ENCODE measurements at regions of chr4 and their contacts with region 1.

Region 1: GRCh38 chr4:38759113-38759789 is 23.5 kb downstream of the TLR10 start:
- DNase-seq: peak; percentile 59
- H3K4me3 Mint-ChIP-seq: no peak overlapping the region
- H3K27ac Mint-ChIP-seq: no peak overlapping the region
- H3K4me1 Mint-ChIP-seq: no peaks in the 10 kb centered on the region
- H3K27me3 Mint-ChIP-seq: no peaks in the 10 kb centered on the region
- CTCF ChIP-seq: peak; percentile 78

Region 2: DNA sequence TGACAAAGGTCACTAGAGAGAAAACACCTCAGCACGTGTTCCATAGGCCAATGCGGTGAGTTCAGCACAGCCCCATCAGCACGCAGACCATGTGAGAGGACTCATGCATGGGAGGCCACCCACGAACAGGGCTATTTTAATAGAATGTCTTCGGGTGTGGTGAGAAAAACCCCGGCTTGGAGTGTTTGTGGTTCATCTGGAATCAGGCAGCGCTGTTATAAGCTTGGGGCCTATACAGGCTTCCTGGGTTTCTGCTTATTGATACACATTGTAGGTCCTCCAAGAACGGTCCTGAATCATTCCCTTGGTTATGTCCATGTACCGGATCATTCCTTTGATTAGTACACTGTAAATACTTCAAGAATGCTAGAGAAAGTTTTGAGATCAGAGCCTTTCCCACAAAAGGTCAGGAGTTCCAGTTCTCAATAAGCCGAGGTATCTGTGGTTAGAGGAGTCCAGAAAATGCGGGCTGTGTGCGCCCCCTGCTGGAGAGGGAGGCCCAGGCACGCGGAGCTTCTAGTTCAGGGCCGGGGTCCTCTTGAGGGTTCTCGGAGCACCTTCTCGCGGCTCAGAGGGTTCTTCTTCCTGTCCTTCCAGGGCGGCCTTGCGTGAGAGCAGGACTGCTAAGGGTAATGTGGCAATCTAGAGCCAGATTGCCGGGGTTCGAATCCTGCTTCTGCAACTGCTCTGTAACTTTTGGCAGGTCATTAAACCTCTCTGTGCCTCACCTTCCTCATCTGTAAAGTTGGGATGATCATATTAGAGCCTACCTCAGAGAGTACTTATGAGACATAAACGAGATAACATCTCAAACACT is 28.2 kb before region 1 on chr4:
- CTCF ChIA-PET with region 1: interaction called, 11 read pairs
- POLR2A ChIA-PET with region 1: interaction called, 4 read pairs
- intact Hi-C with region 1: no loop called
- DNase-seq: peak; percentile 81
- H3K4me3 Mint-ChIP-seq: no peak overlapping the region
- H3K27ac Mint-ChIP-seq: no peak overlapping the region
- H3K4me1 Mint-ChIP-seq: peaks cover 16% of the 10 kb centered on the region
- H3K27me3 Mint-ChIP-seq: no peaks in the 10 kb centered on the region
- CTCF ChIP-seq: peak; percentile 97

Region 3: DNA sequence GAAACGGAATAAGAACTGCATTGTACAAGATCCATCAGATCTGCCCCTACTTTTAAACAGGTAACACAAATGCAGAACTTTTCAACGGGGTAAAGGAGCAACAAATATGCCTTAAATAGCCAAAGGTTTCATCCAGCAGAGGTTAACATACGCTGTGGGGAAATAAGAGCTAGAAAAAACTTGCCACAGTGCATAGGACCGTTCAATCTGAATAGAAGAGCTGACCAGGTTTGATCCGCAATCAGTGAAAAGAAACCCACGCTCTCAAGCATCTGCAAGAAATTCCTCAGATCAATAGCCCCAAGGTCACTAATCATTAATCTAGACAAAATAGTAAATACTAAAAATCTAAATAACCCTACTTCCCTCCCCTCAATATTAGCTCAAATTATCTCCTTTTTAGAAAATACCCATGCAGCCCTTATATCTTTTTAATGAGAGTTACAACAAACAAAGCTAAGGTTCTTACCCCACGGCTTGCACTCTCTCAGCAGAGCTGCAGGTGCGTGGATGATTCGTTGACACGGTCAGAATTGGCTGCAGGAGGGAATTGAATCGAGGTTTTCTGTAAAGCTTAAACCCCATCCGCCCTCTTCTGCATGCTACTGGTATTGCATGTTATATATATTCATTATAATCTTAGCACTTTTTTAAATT is 23.3 kb after region 1 on chr4 and contains the start of gene TLR10:
- CTCF ChIA-PET with region 1: interaction called, 268 read pairs
- POLR2A ChIA-PET with region 1: interaction called, 11 read pairs
- intact Hi-C with region 1: loop called (anchors 1 kb)
- DNase-seq: peak; percentile 56
- H3K4me3 Mint-ChIP-seq: no peak within 1 kb of the TSS
- H3K27ac Mint-ChIP-seq: no peak within 1 kb of the TSS
- H3K4me1 Mint-ChIP-seq: no peaks in the 10 kb centered on the region
- H3K27me3 Mint-ChIP-seq: no peaks in the 10 kb centered on the region
- CTCF ChIP-seq: peak; percentile 54
- total RNA-seq, gene TLR10: not detected in 2 replicates

Region 4: DNA sequence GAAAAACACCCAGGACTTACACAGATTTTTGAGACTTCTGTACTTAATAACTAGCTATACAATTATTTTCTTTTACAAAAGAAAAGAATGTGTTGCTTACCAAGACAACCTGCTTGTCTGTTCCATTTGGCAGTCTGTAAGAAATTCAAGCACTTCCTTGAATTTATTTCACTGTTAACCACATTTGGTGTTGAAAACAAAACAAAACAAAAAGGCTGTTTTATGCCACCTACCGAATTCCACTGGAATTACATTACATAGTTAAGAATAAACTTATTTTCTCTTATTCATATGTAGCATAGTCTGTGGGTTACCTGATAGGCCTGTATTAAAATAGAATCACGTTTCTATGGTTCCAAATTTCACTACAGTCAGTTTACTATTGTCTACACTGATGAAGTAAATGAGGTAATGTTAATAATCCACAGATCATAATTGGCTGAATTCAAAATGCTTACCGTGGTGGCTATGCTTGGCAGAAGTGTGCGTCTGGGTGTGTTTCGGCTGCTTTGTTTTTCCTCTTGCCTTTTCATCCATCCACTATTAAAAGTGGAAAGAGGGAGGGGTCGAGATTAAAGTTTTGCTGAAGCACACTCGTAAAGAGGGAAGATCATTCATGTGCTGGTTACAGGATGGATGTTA is 45.5 kb after region 1 on chr4 and contains the start of gene TLR1:
- CTCF ChIA-PET with region 1: interaction called, 91 read pairs
- POLR2A ChIA-PET with region 1: interaction called, 12 read pairs
- intact Hi-C with region 1: loop called (anchors 2 kb)
- DNase-seq: peak; percentile 70
- H3K4me3 Mint-ChIP-seq: peak within 1 kb of the TSS; percentile 70
- H3K27ac Mint-ChIP-seq: peak within 1 kb of the TSS; percentile 97
- H3K4me1 Mint-ChIP-seq: peaks cover 25% of the 10 kb centered on the region
- H3K27me3 Mint-ChIP-seq: no peaks in the 10 kb centered on the region
- CTCF ChIP-seq: peak; percentile 40
- total RNA-seq, gene TLR1: 1.9 and 2.2 TPM in 2 replicates

Region 5: DNA sequence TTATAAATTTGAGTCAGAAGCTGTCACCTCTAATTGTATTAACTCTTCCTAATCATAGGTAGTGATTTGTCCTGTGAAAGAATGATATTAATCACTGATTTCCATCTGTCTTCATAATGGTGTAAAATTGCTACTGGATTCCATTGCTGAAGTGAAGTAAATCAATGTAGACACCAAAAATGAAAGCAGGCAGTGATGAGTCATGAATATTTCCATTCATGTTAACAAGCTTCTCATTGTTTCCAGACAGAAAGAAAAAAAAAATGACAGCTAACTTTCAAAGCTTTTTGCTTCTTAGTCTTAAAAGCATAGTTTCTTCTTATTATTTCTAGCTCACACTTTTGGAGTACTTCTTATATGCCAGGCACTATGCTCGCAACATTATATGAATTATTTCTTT is 129.9 kb after region 1 on chr4:
- CTCF ChIA-PET with region 1: interaction called, 22 read pairs
- POLR2A ChIA-PET with region 1: no interaction called
- intact Hi-C with region 1: no loop called
- DNase-seq: peak; percentile 64
- H3K4me3 Mint-ChIP-seq: peak overlapping the region; percentile 21
- H3K27ac Mint-ChIP-seq: peak overlapping the region; percentile 49
- H3K4me1 Mint-ChIP-seq: peaks cover 6% of the 10 kb centered on the region
- H3K27me3 Mint-ChIP-seq: no peaks in the 10 kb centered on the region
- CTCF ChIP-seq: no peak

Region 6: DNA sequence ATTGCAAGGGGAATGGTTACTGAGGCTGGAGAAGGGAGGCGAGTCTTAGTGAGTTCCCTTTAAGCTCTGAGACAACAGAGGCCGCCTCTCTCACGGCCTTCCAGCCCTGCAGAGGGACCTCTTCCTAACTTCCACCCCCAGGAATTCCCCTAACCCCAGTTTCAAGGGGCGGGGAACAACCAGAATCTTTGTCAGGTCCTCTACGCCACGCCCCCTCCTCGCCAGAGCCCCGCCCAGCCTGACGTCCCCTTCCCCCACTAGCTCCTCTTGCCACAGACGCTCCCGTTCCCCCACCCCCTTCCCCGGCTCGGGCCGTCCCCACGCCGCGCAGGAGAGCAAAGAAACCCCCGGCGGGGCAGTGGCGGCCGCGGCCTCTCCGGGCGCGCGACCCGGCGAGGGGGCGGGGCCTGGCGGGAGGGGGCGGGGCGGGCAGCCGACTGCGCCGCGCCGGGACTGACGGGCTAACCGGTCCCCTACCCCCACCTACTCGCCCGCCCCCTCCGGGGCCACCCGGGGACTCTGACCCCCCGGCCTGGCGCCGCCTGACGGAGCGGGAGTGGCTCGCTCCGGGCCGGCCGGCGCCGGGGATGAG is 285.2 kb after region 1 on chr4:
- CTCF ChIA-PET with region 1: no interaction called
- POLR2A ChIA-PET with region 1: no interaction called
- intact Hi-C with region 1: loop called (anchors 10 kb)
- DNase-seq: peak; percentile 95
- H3K4me3 Mint-ChIP-seq: peak overlapping the region; percentile 72
- H3K27ac Mint-ChIP-seq: peak overlapping the region; percentile 73
- H3K4me1 Mint-ChIP-seq: peaks cover 33% of the 10 kb centered on the region
- H3K27me3 Mint-ChIP-seq: no peaks in the 10 kb centered on the region
- CTCF ChIP-seq: no peak

Region 7: DNA sequence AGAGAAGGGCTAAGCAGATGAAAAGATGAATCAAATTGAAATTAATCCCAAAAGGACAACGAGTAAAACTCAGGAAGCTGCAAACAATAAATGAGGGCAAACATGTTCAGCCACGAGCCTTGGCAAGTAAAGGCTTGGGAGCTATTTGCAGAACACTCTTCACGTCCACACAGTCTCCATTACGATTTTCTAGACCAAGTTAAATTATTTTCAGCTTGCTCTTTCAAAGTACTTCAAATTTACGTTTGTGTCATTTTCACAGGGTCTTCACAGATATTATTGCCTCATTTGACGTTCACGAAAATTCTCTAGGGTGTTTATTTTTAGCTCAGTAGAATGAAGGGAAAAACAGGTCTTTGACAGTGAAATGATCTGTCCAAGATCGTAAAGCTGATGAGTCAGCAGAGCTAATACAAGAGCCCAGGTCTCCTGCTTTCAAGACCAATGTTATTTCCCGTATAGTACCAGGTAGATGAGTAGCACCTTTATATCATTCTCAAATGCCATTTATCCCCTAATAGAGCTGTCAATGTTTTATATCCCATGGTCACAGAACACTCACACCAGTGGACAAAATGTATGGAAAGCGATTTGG is 668.4 kb after region 1 on chr4:
- CTCF ChIA-PET with region 1: no interaction called
- POLR2A ChIA-PET with region 1: no interaction called
- intact Hi-C with region 1: loop called (anchors 10 kb)
- DNase-seq: no peak
- H3K4me3 Mint-ChIP-seq: no peak overlapping the region
- H3K27ac Mint-ChIP-seq: no peak overlapping the region
- H3K4me1 Mint-ChIP-seq: no peaks in the 10 kb centered on the region
- H3K27me3 Mint-ChIP-seq: no peaks in the 10 kb centered on the region
- CTCF ChIP-seq: no peak

Measured in MCF 10A (cell line).